GM18951 (cell line): ENCODE measurements at regions of chr9 and their contacts with region 1.

Region 1: GRCh38 chr9:36738318-36738976 is 165.8 kb downstream of the MELK start:
- POLR2A ChIP-seq: no peak

Region 2: GRCh38 chr9:36400332-36401163 is 337.9 kb before region 1 on chr9:
- in situ Hi-C with region 1: loop called (anchors 10 kb)
- POLR2A ChIP-seq: peak; percentile 66

Region 3: DNA sequence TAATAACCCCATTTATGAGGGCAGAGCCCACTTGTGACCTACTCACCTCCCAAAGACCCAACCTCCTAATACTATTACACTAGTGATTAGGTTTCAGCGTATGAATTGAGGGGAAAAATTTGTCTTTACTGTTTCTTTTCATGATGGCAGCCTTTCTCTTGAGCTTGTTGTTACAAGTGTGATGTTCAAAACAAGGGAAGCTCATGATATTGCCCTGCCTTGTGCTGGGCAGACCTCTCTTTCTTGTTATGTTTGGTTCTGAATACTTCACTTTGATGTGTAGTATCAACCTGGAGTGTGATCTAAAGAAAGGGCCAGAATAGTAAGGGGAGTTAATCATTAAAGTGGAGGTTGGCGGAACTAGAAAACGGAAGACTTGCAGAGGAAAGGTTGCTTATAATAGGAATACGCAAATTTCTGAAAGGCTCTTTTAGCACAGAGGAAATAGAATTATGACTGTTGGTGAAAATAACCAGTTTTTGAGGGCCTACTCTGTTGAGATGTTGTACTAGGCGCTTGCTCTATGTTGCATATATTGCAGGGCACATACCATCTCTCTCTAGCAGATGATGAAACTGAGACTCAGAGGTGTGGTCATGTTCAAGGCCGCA is 97.6 kb before region 1 on chr9:
- in situ Hi-C with region 1: loop called (anchors 10 kb)
- POLR2A ChIP-seq: peak; percentile 27

Region 4: GRCh38 chr9:37036776-37037502 is 298.5 kb after region 1 on chr9:
- in situ Hi-C with region 1: no loop called
- POLR2A ChIP-seq: peak; percentile 73